Gastrocnemius medialis (tissue), 4 donors: ENCODE measurements at regions of chr2 and their contacts with region 1.

Region 1: GRCh38 chr2:109208081-109208950 is 79.3 kb downstream of the SH3RF3 start:
- DNase-seq: no peak
- ATAC-seq: peak; percentile 68 to 70
- H3K4me3 ChIP-seq: no peak overlapping the region
- H3K27ac ChIP-seq: no peak overlapping the region
- H3K4me1 ChIP-seq: no peaks in the 10 kb centered on the region
- H3K27me3 ChIP-seq: no peaks in the 10 kb centered on the region
- CTCF ChIP-seq: peak in 3 of 5 experiments; percentile 42 to 47 (median 43)
- POLR2A ChIP-seq: no peak

Region 2: DNA sequence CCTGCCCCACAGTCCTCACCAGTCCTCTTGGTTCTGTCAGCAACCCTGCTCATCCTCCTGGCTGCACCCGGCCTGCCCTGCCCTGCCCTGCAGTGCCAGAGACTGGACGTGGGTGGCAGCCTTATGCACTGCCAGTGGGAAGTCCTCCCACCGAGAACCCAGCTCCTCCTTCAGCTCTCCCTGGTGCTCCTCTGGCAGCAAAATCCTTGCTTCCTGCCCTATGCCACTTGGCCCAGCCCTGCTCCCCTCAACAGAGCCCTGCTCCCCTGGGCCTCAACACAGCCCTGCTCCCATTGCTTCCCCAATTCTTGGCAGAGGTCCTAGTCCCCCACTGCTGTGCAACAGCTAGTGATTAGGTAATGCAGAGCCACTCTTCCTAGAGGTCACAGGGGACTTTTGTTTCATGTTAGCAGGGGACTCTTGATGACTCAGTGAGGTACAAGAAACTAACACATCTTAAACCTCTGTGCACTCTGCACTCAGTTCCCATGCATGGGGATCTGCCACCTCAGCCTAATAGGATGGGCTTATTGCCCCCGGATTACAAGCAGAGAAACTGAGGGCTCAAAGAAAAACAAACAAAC is 161.3 kb before region 1 on chr2:
- in situ Hi-C with region 1: no loop called
- intact Hi-C with region 1: no loop called
- DNase-seq: no peak
- ATAC-seq: no peak
- H3K4me3 ChIP-seq: no peak overlapping the region
- H3K27ac ChIP-seq: no peak overlapping the region
- H3K4me1 ChIP-seq: no peaks in the 10 kb centered on the region
- H3K27me3 ChIP-seq: no peaks in the 10 kb centered on the region
- CTCF ChIP-seq: no peak
- POLR2A ChIP-seq: no peak

Region 3: GRCh38 chr2:109128048-109128465 is 80.3 kb before region 1 on chr2:
- in situ Hi-C with region 1: no loop called
- intact Hi-C with region 1: loop called (anchors 1 kb)
- DNase-seq: peak; percentile 71 to 75
- ATAC-seq: peak; percentile 71 to 78
- H3K4me3 ChIP-seq: peak overlapping the region; percentile 63 to 82 (median 70)
- H3K27ac ChIP-seq: peak overlapping the region; percentile 59 to 79 (median 67)
- H3K4me1 ChIP-seq: peaks cover 4 to 7% of the 10 kb centered on the region in 2 donors
- H3K27me3 ChIP-seq: no peaks in the 10 kb centered on the region
- CTCF ChIP-seq: peak; percentile 91 to 95 (median 94)
- POLR2A ChIP-seq: peak; percentile 56 to 61

Region 4: GRCh38 chr2:109304731-109305470 is 96.6 kb after region 1 on chr2:
- in situ Hi-C with region 1: no loop called
- intact Hi-C with region 1: no loop called
- DNase-seq: no peak
- ATAC-seq: no peak
- H3K4me3 ChIP-seq: no peak overlapping the region
- H3K27ac ChIP-seq: no peak overlapping the region
- H3K4me1 ChIP-seq: peaks cover 0 to 7% of the 10 kb centered on the region in 2 donors
- H3K27me3 ChIP-seq: no peaks in the 10 kb centered on the region
- CTCF ChIP-seq: no peak
- POLR2A ChIP-seq: no peak